ENCODE measurements at regions of chr19 and their contacts with region 1.

Region 1: DNA sequence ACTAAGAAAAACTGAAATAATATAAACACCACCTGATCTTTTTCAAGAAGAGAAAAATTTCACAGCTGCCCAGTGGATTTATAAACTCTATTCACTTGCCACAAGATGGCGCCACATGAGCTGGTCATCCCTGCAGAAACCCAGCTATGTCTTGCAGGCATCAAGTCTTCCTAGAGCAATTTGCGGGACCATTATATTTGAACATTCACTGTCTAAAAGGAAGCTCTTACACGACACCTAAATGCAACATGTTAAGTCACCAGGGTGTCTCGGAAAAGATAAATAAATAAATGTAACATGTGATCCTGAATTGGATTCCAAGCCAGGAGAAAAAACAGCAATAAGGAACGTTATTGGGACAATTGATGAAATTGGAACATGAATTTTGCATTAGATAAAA is 20.3 kb upstream of the AKT2 start:
- DNase-seq: peak in 1 of 2 donors; percentile 74
- H3K4me3 ChIP-seq: no peak overlapping the region
- H3K27ac ChIP-seq: no peak overlapping the region
- H3K4me1 ChIP-seq: no peaks in the 10 kb centered on the region
- H3K27me3 ChIP-seq: no peaks in the 10 kb centered on the region
- CTCF ChIP-seq: peak; percentile 61 to 77 (median 67)

Region 2: DNA sequence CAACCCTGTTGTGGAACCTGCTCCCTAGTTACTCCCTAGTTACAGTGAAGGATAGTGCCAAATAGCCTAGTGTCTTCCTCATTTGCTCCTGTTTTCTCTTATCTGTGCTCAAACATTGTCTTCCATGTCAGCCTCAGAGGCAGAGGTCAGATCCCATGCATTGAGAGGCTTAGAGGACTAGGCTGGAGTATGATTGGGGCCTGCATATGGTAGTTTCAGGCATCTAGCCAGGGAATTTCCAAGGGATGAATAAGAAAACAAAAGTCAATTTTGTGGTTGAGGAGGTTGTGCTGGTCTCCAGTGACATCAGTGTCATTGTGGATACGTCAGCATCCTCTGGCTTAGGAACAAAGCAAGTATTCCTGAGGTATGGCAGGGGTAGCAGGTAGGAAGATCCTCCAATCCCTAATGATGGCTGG is 299.1 kb before region 1 on chr19:
- intact Hi-C with region 1: no loop called
- DNase-seq: no peak
- H3K4me3 ChIP-seq: no peak overlapping the region
- H3K27ac ChIP-seq: no peak overlapping the region
- H3K4me1 ChIP-seq: no peaks in the 10 kb centered on the region
- H3K27me3 ChIP-seq: no peaks in the 10 kb centered on the region
- CTCF ChIP-seq: no peak

Region 3: DNA sequence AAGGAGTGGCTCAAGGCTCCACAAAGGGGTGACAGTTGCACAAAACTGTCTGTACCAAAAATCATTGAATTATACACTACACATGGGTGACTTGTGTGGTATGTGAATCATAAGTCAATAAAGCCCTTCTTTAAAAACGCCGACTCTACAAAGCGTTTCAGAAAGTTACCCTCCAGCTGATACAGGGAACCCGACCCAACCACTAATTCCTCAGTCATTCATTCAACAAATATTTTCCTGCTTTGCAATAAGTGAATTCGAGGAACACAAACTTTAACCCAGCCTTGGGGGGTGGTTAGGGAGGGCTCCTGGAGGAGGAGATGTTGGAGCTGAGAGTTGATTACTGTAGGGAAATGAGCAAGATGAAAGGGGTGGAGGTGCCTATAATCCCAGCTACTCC is 327.8 kb after region 1 on chr19:
- intact Hi-C with region 1: loop called (anchors 10 kb)
- DNase-seq: no peak
- H3K4me3 ChIP-seq: no peak overlapping the region
- H3K27ac ChIP-seq: peak overlapping the region; percentile 60 to 63
- H3K4me1 ChIP-seq: peaks cover 2 to 6% of the 10 kb centered on the region in 2 donors
- H3K27me3 ChIP-seq: no peaks in the 10 kb centered on the region
- CTCF ChIP-seq: no peak

Region 4: GRCh38 chr19:40750059-40750873 is 444.9 kb after region 1 on chr19 and contains the start of gene ACTMAP:
- intact Hi-C with region 1: no loop called
- DNase-seq: peak; percentile 99 to 100
- H3K4me3 ChIP-seq: peak within 1 kb of the TSS; percentile 65 to 80
- H3K27ac ChIP-seq: peak within 1 kb of the TSS; percentile 89 to 93
- H3K4me1 ChIP-seq: peaks cover 12 to 32% of the 10 kb centered on the region in 2 donors
- H3K27me3 ChIP-seq: no peaks in the 10 kb centered on the region
- CTCF ChIP-seq: no peak
- total RNA-seq, gene ACTMAP: 8.3 TPM